ENCODE measurements at regions of chr5 and their contacts with region 1.

Region 1: GRCh38 chr5:134289509-134290113 is 63.7 kb upstream of the PPP2CA start:
- DNase-seq: peak; percentile 56
- H3K4me3 Mint-ChIP-seq: no peak overlapping the region
- H3K27ac Mint-ChIP-seq: no peak overlapping the region
- H3K4me1 Mint-ChIP-seq: peaks cover 4% of the 10 kb centered on the region
- H3K27me3 Mint-ChIP-seq: no peaks in the 10 kb centered on the region

Region 2: DNA sequence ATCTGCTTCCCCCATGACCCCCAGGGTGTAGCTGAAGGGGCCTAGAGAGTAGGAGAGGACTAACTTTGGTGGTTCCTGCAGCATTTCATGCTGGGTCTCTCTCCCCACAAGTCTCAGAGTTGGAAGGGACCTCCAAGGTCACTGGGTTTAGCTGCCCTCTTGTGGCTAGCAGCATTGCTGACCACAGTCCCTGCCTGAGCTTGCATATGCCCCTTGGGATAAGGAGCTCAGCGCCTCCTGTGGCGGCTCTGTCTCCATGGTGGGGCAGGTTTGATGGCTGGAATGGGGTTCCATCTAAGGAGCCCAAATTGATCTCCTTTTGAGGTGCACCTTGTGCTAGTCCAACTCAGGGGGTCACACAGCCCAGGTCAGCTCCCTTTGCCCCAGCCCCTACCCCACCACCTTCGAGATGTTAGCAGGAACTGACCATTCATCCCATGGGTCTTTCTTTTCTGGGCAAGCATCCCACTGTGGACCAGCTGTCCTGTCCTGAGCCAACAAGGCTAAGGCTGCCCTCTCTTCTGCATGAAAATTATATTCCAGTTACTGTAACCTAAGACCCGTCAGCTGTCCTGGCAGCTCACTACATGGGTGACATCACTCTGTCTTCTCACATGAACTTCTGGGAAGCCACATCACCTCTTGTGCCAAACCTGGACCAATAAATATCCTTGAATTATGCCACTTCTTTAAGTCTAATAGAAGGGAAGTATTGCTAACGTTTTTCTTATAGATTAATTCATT is 1041.6 kb before region 1 on chr5:
- CTCF ChIA-PET with region 1: no interaction called
- intact Hi-C with region 1: no loop called
- DNase-seq: no peak
- H3K4me3 Mint-ChIP-seq: no peak overlapping the region
- H3K27ac Mint-ChIP-seq: no peak overlapping the region
- H3K4me1 Mint-ChIP-seq: peaks cover 9% of the 10 kb centered on the region
- H3K27me3 Mint-ChIP-seq: no peaks in the 10 kb centered on the region

Region 3: GRCh38 chr5:133924221-133924920 is 365.2 kb before region 1 on chr5:
- CTCF ChIA-PET with region 1: no interaction called
- intact Hi-C with region 1: no loop called
- DNase-seq: no peak
- H3K4me3 Mint-ChIP-seq: no peak overlapping the region
- H3K27ac Mint-ChIP-seq: no peak overlapping the region
- H3K4me1 Mint-ChIP-seq: peaks cover 35% of the 10 kb centered on the region
- H3K27me3 Mint-ChIP-seq: no peaks in the 10 kb centered on the region

Region 4: GRCh38 chr5:134026521-134027268 is 262.9 kb before region 1 on chr5:
- CTCF ChIA-PET with region 1: interaction called, 5 read pairs
- intact Hi-C with region 1: loop called (anchors 1 kb)
- DNase-seq: peak; percentile 75
- H3K4me3 Mint-ChIP-seq: no peak overlapping the region
- H3K27ac Mint-ChIP-seq: no peak overlapping the region
- H3K4me1 Mint-ChIP-seq: peaks cover 1% of the 10 kb centered on the region
- H3K27me3 Mint-ChIP-seq: no peaks in the 10 kb centered on the region

Region 5: DNA sequence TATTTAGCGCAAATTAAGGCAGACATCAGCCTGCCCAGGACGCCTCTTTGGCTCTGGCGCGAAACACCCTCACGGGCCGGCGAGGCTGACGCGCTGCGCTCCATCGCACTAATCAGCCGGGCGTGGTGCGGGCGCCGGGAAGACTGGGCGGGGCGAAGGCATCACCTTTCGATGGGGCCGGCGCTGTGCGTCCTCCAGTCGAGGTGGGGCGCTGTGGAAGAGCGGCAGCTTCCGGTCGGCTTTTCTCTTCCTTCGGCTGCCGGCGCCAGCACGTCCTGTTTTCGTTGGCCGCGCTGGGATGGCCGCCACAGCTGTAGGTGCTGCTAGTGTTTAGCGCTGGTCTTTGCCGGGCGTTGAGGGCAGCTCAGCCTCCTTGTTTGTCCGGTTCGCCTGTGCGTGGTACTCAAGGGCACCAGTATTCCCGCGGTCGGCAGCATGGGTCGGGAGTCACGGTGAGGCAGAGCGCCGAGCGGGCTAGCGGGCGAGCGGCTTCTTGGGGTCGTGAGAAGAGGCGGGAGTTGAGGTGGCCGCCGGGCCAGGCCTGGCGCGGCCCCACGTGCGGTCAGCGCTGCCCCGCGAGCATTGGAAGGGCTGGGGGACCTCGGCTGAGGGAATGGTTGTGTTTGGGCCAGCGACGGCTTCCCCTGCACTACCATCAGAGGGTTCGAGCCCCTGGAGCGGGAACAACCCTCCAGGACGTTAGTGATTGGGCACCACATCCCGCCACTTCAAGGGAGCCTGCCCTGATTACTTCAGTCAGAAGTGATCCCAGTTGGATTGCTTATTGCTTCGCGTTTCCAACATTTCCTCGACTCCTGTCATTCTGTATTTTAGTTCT is 469.1 kb after region 1 on chr5 and contains the start of gene DDX46:
- CTCF ChIA-PET with region 1: no interaction called
- intact Hi-C with region 1: no loop called
- DNase-seq: peak; percentile 97
- H3K4me3 Mint-ChIP-seq: peak within 1 kb of the TSS; percentile 99
- H3K27ac Mint-ChIP-seq: peak within 1 kb of the TSS; percentile 80
- H3K4me1 Mint-ChIP-seq: peaks cover 34% of the 10 kb centered on the region
- H3K27me3 Mint-ChIP-seq: no peaks in the 10 kb centered on the region
- total RNA-seq, gene DDX46: 47.3 to 48.0 TPM